PC-9 (cell line): ENCODE measurements at regions of chr9 and their contacts with region 1.

Region 1: GRCh38 chr9:4048441-4048840 is 251.4 kb downstream of the GLIS3 start:
- DNase-seq: no peak
- H3K4me3 ChIP-seq: no peak overlapping the region
- H3K27ac ChIP-seq: no peak overlapping the region
- H3K4me1 ChIP-seq: no peaks in the 10 kb centered on the region
- H3K27me3 ChIP-seq: no peaks in the 10 kb centered on the region
- CTCF ChIP-seq: peak; percentile 37

Region 2: DNA sequence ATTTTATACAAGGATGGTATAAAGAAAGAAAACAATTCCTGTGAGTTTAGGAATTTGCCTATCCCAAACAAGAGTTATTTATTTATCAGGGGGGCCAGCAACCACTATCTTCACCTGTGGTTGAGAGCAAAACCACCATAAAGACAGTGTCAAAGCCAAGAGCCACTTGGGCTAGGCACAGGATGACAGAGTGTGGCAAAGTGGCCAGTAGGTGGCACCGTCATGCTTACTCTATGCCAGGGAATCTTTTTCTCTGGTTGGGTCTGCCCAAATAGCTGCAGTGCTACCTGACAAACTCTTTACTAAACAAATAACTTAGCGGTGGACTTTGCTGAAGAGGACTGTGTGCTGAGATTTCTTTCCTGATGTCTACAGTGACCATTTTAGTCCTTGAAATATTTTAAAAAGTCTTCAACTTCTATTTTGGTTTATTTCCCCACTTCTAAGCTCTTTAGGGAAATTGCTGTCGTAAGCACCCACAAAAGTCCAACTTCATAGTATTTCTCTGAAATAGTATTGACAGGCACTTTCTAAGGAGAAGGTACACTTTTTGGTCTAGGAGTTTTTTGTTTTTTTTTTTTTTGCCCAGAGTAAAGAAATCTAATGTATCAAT is 807.7 kb before region 1 on chr9:
- CTCF ChIA-PET with region 1: interaction called, 12 read pairs
- POLR2A ChIA-PET with region 1: no interaction called
- intact Hi-C with region 1: no loop called
- DNase-seq: peak in 1 of 2 experiments; percentile 38
- H3K4me3 ChIP-seq: no peak overlapping the region
- H3K27ac ChIP-seq: no peak overlapping the region
- H3K4me1 ChIP-seq: no peaks in the 10 kb centered on the region
- H3K27me3 ChIP-seq: no peaks in the 10 kb centered on the region
- CTCF ChIP-seq: peak; percentile 71

Region 3: DNA sequence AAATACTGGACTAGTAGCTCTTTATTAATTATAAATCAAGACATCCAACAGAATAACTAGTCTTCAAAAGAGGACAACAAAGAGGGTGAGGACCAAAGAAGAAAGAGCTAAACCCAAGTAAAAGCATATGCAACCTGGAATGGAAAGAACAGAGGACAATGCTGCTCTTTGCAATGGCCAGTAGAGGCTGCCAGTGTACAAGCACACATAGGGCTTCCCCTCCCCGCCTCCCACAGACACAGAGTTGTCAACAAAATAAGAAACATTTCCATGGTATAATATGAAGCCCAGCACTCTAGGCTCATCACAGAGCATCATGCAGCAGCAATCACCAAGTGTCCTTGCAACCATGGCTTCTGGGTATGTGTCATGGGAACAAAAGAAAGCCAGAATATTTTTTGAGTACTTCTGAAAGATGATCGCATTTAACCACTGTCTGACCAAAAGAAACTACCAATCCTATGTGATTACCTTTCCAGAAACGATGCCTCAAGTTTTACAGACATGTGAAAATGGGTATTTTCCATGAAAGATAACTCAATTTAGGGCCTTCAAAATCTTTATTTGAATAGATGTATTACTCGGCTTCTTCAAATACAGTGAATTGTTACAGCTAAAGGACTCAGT is 580.7 kb before region 1 on chr9:
- CTCF ChIA-PET with region 1: interaction called, 25 read pairs
- POLR2A ChIA-PET with region 1: no interaction called
- intact Hi-C with region 1: no loop called
- DNase-seq: peak in 1 of 2 experiments; percentile 19
- H3K4me3 ChIP-seq: no peak overlapping the region
- H3K27ac ChIP-seq: no peak overlapping the region
- H3K4me1 ChIP-seq: no peaks in the 10 kb centered on the region
- H3K27me3 ChIP-seq: no peaks in the 10 kb centered on the region
- CTCF ChIP-seq: peak; percentile 63

Region 4: DNA sequence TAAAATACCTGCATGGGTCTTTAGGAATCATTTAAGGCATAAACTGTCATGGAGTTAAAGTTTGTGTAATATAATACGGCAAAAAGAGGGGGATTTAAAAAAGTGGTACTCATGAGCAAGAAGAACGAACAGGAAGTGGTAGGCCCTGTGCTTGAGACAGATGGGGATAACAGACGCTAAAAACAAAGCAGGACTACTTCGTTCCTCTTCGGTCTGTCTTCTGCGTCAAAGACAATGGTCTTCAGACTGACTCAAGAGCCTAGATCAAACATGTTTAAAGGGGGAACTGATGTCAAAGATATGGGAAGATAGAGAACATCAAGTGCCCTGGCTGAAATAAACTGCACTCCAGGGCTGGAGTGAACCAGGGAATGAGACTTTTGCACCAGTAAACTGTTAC is 462.8 kb before region 1 on chr9:
- CTCF ChIA-PET with region 1: no interaction called
- POLR2A ChIA-PET with region 1: no interaction called
- intact Hi-C with region 1: no loop called
- DNase-seq: no peak
- H3K4me3 ChIP-seq: no peak overlapping the region
- H3K27ac ChIP-seq: no peak overlapping the region
- H3K4me1 ChIP-seq: no peaks in the 10 kb centered on the region
- H3K27me3 ChIP-seq: no peaks in the 10 kb centered on the region
- CTCF ChIP-seq: no peak